Dendritic cell treated with granulocyte-macrophage colony-stimulating factor and Interleukin-4, amounts not matched to agents 40 ng/mL and 50 ng/mL, for 4 days (primary cell): ENCODE measurements at regions of chr1 and their contacts with region 1.

Region 1: DNA sequence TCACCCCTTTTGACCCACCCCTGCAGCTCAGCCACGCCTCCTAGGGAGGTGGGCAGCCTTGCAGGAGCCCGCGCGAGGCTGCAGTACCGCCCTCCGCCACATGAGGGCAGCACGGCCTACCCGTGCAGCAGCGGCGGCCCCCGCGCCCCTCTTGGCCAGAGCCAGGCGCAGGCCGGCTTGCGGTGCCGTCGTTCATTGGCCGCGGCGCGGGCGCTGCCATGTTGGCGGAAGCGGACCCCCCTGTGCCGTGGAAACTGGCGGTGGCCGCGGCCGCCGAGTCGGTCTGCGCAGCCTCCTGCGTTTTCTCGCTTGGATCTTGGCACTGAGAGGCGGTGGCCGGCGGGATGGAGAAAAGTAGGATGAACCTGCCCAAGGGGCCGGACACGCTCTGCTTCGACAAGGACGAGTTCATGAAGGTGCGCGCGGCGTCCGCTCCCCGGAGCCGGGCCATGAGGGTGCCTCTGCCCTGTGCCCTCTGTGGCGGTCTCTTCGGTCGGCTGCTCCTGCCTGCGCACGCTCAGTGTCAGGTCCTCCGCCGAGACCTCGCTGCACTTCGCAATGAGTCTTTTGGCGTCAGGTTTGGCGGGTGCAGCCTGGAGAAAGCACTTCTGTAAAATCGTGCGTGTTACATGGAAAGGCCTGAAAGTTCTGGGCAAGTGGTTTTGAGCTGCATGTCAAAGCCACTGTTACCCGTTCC is at the start of gene COG2:
- H3K4me3 Mint-ChIP-seq: peak within 1 kb of the TSS; percentile 98
- H3K27ac Mint-ChIP-seq: peak within 1 kb of the TSS; percentile 94
- H3K4me1 Mint-ChIP-seq: peaks cover 43% of the 10 kb centered on the region
- H3K27me3 Mint-ChIP-seq: peaks cover 14% of the 10 kb centered on the region

Region 2: DNA sequence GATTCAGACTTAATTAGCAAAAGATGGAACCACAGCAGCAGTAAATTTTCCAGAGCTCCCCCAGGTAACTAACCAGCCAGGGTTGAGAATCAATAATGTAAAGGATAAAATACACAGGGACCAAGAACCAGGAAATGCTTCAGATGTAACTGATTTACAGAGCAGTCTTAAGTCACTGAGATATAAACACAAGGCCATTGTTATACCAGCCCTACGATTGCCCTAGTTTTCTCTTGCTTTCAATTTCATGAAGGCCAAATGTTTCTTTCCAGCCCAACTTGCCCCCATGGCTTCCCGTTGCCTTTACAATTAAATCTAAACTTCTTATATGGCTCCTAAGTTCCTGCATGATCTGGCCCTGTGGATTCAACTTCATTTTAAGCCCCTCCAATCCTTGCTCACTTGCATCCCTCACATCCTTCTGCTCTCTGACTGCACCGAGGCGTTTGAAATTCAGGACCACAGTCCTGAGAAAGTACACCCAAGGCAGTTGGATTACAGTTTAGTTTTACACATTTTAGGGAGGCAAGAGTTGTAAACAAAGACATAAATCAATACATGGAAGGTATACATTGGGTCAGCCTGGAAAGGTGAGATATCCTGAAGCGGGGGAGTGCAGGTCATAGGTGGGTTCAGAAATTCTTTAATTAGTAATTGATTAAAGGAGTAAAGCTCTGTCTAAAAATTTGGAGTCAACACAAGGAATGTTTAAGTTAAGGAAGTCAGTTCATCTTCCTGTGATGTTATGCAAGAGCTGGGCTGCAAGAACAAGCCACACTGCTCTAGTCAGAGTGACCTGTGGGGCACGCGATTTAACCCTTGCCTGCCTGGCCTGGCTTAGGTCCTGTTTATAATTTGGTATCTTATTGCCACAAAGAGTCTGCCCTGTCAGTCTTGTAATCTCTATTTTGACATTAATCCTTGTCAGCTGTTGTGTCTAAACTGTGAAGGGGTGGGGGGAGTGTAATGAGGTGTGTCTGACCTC is 70.0 kb before region 1 on chr1:
- intact Hi-C with region 1: no loop called
- H3K4me3 Mint-ChIP-seq: no peak overlapping the region
- H3K27ac Mint-ChIP-seq: no peak overlapping the region
- H3K4me1 Mint-ChIP-seq: peaks cover 37% of the 10 kb centered on the region
- H3K27me3 Mint-ChIP-seq: no peaks in the 10 kb centered on the region

Region 3: GRCh38 chr1:230609208-230609607 is 33.2 kb before region 1 on chr1:
- intact Hi-C with region 1: no loop called
- H3K4me3 Mint-ChIP-seq: no peak overlapping the region
- H3K27ac Mint-ChIP-seq: peak overlapping the region; percentile 33
- H3K4me1 Mint-ChIP-seq: peaks cover 5% of the 10 kb centered on the region
- H3K27me3 Mint-ChIP-seq: peaks cover 19% of the 10 kb centered on the region

Region 4: DNA sequence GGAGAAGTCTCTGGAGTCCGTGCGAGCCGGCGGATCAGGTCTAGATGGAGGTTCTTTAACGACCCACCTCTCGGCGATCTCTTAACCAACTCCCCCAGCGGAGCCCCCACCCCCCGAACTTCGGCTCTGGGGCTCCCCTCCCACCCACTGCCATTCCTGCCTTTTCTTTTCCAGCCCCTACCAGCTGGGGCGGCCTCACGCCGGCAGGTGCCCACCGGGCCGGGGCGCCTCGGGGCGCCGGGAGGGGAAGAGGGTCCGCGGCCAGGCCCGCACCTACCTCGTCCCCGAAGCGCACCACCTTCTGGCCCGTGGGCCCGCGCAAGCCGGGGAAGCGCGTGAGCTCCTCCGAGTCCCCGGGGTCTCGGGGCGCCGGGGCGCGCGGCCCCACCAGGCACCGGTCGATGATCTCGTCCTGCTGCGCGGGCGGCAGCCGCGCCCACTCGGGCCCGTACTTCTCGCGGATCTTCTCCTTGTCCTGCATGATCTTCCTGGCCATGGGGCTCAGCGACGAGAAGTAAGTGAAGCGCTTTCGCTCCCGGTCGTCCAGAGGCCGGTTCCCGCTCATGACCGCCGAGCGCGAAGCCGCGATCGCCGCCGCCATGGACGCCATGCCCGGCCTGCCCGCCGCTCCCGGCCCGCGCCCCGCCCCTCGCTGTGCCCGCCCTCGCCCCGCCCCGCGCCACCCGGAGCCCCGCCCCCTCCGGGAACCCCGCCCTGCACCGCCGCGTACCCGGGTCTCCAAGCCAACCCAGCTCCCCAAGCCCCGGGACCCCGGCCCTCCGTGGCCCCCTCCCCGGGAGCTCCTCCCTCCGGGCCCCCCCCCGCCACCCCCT is 225.7 kb after region 1 on chr1 and contains the start of gene C1orf198:
- intact Hi-C with region 1: loop called (anchors 5 kb)
- H3K4me3 Mint-ChIP-seq: peak within 1 kb of the TSS; percentile 86
- H3K27ac Mint-ChIP-seq: peak within 1 kb of the TSS; percentile 76
- H3K4me1 Mint-ChIP-seq: peaks cover 25% of the 10 kb centered on the region
- H3K27me3 Mint-ChIP-seq: peaks cover 53% of the 10 kb centered on the region

Region 5: GRCh38 chr1:230986976-230987375 is 344.6 kb after region 1 on chr1:
- intact Hi-C with region 1: loop called (anchors 10 kb)
- H3K4me3 Mint-ChIP-seq: no peak overlapping the region
- H3K27ac Mint-ChIP-seq: no peak overlapping the region
- H3K4me1 Mint-ChIP-seq: peaks cover 25% of the 10 kb centered on the region
- H3K27me3 Mint-ChIP-seq: no peaks in the 10 kb centered on the region